Heart left ventricle (tissue), 16 donors: ENCODE measurements at regions of chr7 and their contacts with region 1.

Region 1: GRCh38 chr7:43465581-43466554 is 117.0 kb upstream of the STK17A start:
- DNase-seq: no peak
- ATAC-seq: no peak
- H3K4me3 ChIP-seq: no peak overlapping the region
- H3K27ac ChIP-seq: no peak overlapping the region
- H3K4me1 ChIP-seq: peaks cover 0 to 19% (median 4%) of the 10 kb centered on the region in 12 donors
- H3K27me3 ChIP-seq: no peaks in the 10 kb centered on the region
- CTCF ChIP-seq: no peak
- POLR2A ChIP-seq: no peak

Region 2: DNA sequence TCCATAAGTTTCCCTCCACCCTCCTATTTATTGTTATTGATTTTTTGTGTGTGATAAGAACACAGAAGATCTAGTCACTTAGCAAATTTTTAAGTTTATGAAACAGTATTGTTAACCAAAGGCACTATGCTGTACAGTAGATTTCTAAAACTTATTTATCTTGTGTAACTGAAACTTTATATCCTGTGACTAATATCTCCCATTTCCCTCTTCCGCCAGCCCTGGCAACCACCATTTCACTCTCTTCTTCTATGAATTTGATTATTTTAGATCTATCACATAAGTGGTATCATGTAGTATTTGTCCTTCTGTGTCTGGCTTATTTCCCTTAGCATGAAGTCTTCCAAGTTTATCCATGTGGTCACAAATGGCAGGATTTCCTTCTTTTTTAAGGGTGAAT is 1618.7 kb before region 1 on chr7:
- intact Hi-C with region 1: no loop called
- DNase-seq: no peak
- ATAC-seq: no peak
- H3K4me3 ChIP-seq: no peak overlapping the region
- H3K27ac ChIP-seq: no peak overlapping the region
- H3K4me1 ChIP-seq: no peaks in the 10 kb centered on the region
- H3K27me3 ChIP-seq: no peaks in the 10 kb centered on the region
- CTCF ChIP-seq: no peak
- POLR2A ChIP-seq: no peak

Region 3: DNA sequence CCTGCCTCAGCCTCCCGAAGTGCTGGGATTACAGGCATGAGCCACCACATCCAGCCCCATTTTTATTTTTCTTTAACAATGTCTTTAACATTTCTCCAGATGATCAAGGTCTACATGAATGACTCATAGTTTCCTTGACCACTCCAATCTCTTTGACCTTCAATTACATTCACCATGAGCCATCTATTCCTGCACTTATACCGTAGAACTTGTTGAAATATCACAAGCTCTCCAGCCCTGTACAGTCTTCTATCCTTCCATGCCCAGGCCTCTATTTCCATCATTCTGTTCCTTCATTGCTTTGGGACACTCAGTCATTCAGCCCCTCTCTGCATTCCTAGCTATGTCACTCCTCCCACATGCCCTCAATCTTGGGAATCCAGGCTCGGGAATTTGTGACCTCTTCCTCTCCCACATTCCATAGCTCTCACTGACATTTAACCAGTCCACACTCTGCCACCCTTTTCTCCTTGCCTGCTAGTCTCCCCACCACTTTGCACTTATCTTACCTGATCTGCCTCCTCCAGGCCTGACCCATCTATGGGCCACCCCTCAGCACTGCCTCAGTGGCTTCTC is 34.8 kb before region 1 on chr7:
- intact Hi-C with region 1: no loop called
- DNase-seq: no peak
- ATAC-seq: no peak
- H3K4me3 ChIP-seq: no peak overlapping the region
- H3K27ac ChIP-seq: no peak overlapping the region
- H3K4me1 ChIP-seq: no peaks in the 10 kb centered on the region
- H3K27me3 ChIP-seq: no peaks in the 10 kb centered on the region
- CTCF ChIP-seq: no peak
- POLR2A ChIP-seq: no peak

Region 4: DNA sequence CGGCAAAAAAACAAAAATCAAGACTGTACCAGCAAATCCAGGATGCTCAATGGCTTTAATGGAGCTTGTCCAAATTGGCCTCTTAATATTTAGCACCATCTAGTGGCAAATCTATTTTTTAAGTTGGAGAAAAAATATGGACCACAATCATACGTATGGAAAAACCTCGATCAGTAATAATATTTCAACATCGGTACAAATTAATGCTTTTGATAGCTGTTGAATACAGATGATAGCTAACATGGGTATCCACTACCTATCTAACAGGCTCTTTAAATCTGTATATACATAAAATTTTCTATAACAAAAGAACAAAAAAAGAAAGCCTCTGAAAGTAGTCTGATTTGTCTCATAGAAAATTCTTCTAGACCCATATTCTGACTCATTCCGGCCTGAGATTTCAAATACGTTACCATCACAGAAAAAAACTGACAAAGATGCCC is 234.2 kb after region 1 on chr7:
- intact Hi-C with region 1: loop called in 2 of 10 experiments (anchors 10 kb)
- DNase-seq: no peak
- ATAC-seq: peak in 3 of 4 donors; percentile 44 to 73 (median 72)
- H3K4me3 ChIP-seq: no peak overlapping the region
- H3K27ac ChIP-seq: no peak overlapping the region
- H3K4me1 ChIP-seq: peaks cover 0 to 19% (median 4%) of the 10 kb centered on the region in 12 donors
- H3K27me3 ChIP-seq: no peaks in the 10 kb centered on the region
- CTCF ChIP-seq: peak; percentile 58 to 90 (median 70)
- POLR2A ChIP-seq: no peak